ENCODE measurements at regions of chr1 and their contacts with region 1.

Region 1: DNA sequence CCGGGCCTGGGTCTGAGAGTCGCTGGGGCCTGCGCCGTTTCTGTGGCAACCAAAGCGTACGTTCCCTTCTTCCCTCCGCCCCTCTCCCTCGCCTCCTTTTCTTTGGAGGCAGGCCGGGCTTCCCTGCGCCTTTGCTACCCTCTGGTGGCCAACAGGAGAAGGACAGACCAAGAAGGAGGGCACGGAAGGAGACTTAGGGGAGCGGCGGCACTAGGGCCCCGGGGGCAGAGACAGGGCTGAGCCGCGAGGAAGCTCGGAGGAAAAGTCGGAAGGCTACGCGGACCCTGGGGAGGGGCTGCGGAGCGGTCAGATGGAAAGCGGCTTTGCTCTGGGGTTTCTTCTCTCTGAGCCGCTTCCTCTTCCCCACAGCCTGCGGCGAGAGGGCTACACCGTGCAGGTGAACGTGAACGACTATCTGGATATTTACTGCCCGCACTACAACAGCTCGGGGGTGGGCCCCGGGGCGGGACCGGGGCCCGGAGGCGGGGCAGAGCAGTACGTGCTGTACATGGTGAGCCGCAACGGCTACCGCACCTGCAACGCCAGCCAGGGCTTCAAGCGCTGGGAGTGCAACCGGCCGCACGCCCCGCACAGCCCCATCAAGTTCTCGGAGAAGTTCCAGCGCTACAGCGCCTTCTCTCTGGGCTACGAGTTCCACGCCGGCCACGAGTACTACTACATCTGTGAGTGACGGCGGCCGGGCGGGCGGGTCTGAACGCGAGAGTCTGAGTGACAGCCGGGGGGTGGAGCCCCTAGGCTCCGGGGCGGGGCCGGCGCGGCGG is 6.3 kb downstream of the EFNA3 start:
- DNase-seq: peak; percentile 86
- H3K4me3 ChIP-seq: peak overlapping the region; percentile 86
- H3K27ac ChIP-seq: peak overlapping the region; percentile 12
- H3K27me3 ChIP-seq: peaks cover 45% of the 10 kb centered on the region
- CTCF ChIP-seq: peak; percentile 92

Region 2: DNA sequence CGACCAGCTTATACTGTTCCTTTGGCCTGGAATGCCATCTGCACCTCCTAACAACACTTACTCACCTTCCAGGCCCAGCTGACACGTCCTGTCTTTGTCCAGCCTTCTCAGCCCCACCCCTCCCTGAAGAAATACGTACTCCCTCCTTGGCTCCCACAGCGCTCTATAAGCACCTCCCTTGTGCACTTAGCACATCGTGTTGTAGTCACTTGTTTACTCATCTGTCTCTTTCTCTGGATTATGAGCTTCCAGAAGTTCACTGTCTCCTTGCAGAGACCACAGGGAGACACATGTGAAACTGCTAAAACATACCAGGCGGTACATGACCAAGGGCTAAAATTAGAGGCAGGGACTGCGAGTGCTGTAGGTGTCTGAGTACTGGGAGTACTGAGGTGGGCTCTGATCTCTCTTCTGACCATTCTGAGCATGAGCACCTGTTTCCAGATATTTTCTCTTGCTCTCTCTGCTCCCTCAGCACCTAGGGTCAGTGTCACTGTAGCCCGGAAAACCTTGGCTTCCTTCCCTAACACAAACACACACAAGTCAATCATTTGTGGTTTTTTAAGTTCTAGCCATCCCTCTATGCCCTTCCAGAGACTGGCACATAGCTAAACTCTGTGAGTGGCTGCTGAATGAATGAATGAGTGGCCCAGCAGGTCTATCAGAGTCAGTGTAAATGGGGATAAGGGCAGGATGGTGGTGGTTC is 46.2 kb before region 1 on chr1:
- CTCF ChIA-PET with region 1: interaction called, 31 read pairs
- POLR2A ChIA-PET with region 1: no interaction called
- DNase-seq: no peak
- H3K4me3 ChIP-seq: no peak overlapping the region
- H3K27ac ChIP-seq: no peak overlapping the region
- H3K27me3 ChIP-seq: peaks cover 41% of the 10 kb centered on the region
- CTCF ChIP-seq: no peak

Region 3: DNA sequence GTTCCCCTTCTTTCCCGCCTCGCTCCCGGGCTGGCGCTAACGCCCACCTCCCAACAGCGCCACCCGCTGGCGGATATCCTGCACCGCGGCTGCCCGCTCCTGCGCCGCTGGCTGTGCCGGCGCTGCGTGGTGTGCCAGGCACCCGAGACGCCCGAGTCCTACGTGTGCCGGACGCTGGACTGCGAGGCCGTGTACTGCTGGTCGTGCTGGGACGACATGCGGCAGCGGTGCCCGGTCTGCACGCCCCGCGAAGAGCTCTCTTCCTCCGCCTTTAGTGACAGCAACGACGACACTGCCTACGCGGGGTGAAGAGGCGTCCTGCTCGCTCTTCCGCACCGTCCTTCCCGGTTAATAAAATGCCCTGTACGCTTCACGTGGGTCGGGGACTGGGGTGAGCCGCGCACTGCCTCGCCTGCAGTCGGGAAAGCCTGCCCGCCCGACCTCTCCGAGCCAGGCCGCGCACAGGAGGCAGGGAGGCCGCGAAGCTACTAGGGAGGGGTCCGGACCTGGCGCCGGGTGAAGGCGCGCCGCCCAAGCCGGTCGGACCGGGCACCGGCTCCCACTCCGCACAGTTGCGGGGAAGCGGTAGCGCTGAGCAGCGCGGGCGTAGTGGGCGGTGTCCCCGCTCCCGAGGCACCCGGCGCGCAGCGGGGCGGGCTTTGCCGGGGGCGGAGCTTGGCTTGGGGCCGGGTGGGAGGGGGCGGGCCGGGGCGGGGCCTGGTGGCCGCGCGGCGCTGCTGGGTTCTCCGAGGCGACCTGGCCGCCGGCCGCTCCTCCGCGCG is 34.2 kb before region 1 on chr1 and contains the start of gene ADAM15:
- CTCF ChIA-PET with region 1: interaction called, 31 read pairs
- POLR2A ChIA-PET with region 1: no interaction called
- DNase-seq: no peak
- H3K4me3 ChIP-seq: peak within 1 kb of the TSS; percentile 73
- H3K27ac ChIP-seq: peak within 1 kb of the TSS; percentile 31
- H3K27me3 ChIP-seq: no peaks in the 10 kb centered on the region
- CTCF ChIP-seq: peak; percentile 77
- polyA plus RNA-seq, gene ADAM15: 25.9 and 37.5 TPM in 2 replicates

Region 4: GRCh38 chr1:155135415-155136028 is 50.6 kb after region 1 on chr1 and contains the start of gene SLC50A1:
- CTCF ChIA-PET with region 1: interaction called, 10 read pairs
- POLR2A ChIA-PET with region 1: no interaction called
- DNase-seq: peak; percentile 79
- H3K4me3 ChIP-seq: peak within 1 kb of the TSS; percentile 94
- H3K27ac ChIP-seq: peak within 1 kb of the TSS; percentile 100
- H3K27me3 ChIP-seq: no peaks in the 10 kb centered on the region
- CTCF ChIP-seq: peak; percentile 15; the same call in 1 of the 2 replicates
- polyA plus RNA-seq, gene SLC50A1: 29.5 and 31.4 TPM in 2 replicates